K562 (cell line): ENCODE measurements at regions of chr3 and their contacts with region 1.

Region 1: GRCh38 chr3:83233715-83234114 is 1472.3 kb upstream of the GBE1 start:
- DNase-seq: no peak
- ATAC-seq: no peak
- H3K4me3 ChIP-seq: no peak overlapping the region
- H3K27ac ChIP-seq: no peak overlapping the region
- H3K4me1 ChIP-seq: no peaks in the 10 kb centered on the region
- H3K27me3 ChIP-seq: no peaks in the 10 kb centered on the region
- CTCF ChIP-seq: no peak
- EP300 ChIP-seq: no peak
- POLR2A ChIP-seq: no peak
- RAD21 ChIP-seq: no peak

Region 2: DNA sequence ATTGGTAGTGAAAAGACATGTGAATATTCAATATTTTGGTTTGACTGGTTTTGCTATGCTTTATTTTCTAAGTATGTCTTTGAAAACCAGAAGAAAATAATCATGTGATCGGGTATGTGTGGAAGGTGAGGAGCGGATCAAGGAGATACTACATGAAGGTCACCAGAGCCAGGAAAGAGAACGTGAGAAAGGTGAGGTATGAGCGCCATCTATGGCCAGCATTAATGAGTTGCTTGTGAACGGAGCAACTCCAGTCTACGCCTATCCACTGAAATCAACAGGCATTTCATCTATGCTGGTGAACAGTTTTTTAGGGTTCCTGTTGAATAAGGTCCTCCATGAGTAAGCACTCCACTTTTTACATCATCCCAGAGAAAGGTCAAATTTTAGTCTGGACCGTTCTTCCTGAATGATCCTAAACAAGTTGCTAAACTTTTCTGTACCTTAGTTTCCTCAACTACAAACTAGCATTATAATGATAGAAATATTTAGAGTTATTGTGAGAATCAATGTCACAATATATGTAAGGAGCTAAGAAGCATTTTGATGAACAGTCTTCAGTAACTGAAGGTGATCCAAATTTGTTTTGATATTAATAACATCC is 289.9 kb after region 1 on chr3:
- CTCF ChIA-PET with region 1: no interaction called
- POLR2A ChIA-PET with region 1: no interaction called
- in situ Hi-C with region 1: loop called (anchors 10 kb)
- intact Hi-C with region 1: no loop called
- DNase-seq: peak in 1 of 4 experiments; percentile 22
- ATAC-seq: no peak
- H3K4me3 ChIP-seq: no peak overlapping the region
- H3K27ac ChIP-seq: no peak overlapping the region
- H3K4me1 ChIP-seq: no peaks in the 10 kb centered on the region
- H3K27me3 ChIP-seq: no peaks in the 10 kb centered on the region
- CTCF ChIP-seq: 0 out of 6 replicates have a peak, but pooled peaks of 2 of the 3 experiments have one; percentile 5 to 19
- EP300 ChIP-seq: no peak
- POLR2A ChIP-seq: no peak
- RAD21 ChIP-seq: peak; percentile 38 to 54